AG04449 (cell line): ENCODE measurements at regions of chr5 and their contacts with region 1.

Region 1: GRCh38 chr5:95822542-95823181 is at the start of gene GLRX:
- DNase-seq: peak; percentile 86
- H3K4me3 ChIP-seq: peak within 1 kb of the TSS; percentile 83
- CTCF ChIP-seq: no peak

Region 2: GRCh38 chr5:95794070-95794516 is 28.6 kb before region 1 on chr5:
- CTCF ChIA-PET with region 1: interaction called, 10 read pairs
- POLR2A ChIA-PET with region 1: no interaction called
- DNase-seq: peak; percentile 42
- H3K4me3 ChIP-seq: no peak overlapping the region
- CTCF ChIP-seq: no peak

Region 3: DNA sequence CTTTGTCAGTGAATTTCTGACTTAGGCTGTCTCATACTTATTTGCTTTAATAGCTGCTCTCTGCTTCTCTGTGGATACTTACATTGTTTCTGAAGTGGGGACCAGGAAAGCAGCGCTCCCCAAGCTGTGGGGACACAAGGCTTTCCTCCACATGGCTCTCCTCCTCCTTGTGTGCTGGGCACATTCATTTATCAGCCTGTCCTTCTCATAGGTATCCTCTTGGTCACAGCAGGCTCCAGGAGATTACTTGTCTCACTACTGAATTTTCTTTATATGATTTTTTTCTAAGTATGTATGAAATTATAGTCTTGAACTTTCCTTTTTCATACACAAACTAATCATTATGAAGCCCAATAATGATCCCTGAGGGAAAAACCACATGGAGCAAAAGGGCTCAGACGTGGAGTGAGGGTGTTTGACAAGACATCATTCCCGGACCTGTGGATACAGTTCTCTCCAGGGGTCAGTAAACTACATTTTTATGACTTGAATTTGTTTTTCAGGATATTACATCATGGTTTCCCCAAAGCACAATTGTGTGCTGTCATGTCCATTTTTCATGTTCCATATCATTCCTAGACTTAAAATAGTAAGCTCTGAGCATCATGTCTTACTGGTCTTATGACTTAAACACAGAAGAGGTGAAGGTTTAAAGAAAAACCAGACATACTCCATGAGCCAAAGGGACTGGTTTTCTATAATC is 375.8 kb after region 1 on chr5:
- CTCF ChIA-PET with region 1: no interaction called
- POLR2A ChIA-PET with region 1: no interaction called
- DNase-seq: no peak
- H3K4me3 ChIP-seq: no peak overlapping the region
- CTCF ChIP-seq: no peak